Mammary epithelial cell (primary cell): ENCODE measurements at regions of chr1 and their contacts with region 1.

Region 1: GRCh38 chr1:94012686-94013624 is 103.7 kb upstream of the GCLM start:
- DNase-seq: no peak
- H3K4me3 ChIP-seq: no peak overlapping the region
- H3K27ac ChIP-seq: no peak overlapping the region
- H3K4me1 ChIP-seq: peaks cover 5% of the 10 kb centered on the region
- H3K27me3 ChIP-seq: no peaks in the 10 kb centered on the region
- CTCF ChIP-seq: no peak

Region 2: GRCh38 chr1:93919780-93920179 is 93.2 kb before region 1 on chr1:
- CTCF ChIA-PET with region 1: no interaction called
- dilution Hi-C with region 1: loop called (anchors 5 kb)
- in situ Hi-C with region 1: no loop called
- intact Hi-C with region 1: no loop called
- DNase-seq: no peak
- H3K4me3 ChIP-seq: no peak overlapping the region
- H3K27ac ChIP-seq: no peak overlapping the region
- H3K4me1 ChIP-seq: no peaks in the 10 kb centered on the region
- H3K27me3 ChIP-seq: no peaks in the 10 kb centered on the region
- CTCF ChIP-seq: no peak

Region 3: DNA sequence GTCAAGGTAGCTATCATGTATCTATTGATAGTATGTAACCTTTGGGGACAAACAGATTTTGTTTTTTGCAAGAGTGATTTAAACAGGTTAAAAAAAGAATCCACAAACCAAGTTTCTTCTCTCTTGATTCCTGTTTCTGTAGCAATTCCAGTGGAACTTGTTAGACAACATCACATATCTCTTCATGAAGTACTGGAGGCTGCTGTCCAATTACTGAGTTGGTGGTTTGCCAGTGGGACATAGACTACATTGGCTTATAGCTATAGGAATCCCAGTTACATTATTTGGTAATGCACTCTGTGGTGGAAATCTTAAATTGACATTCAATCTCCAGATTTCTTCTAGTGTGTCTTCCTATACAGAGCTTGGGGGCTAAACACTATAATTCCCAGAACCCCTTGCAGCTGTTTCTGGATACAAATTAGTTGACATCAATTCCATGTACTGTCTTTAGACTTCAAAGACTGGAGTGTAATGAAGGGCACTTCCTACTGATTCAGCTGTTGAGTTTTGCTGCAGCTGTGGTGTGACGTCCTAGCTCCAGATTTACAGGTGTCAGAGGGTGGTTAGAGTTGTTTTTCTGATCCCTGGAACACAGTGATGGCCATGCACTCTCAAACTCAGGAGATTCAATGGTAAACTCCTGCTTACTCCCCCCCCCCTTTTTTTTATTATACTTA is 74.3 kb before region 1 on chr1:
- CTCF ChIA-PET with region 1: no interaction called
- dilution Hi-C with region 1: no loop called
- in situ Hi-C with region 1: no loop called
- intact Hi-C with region 1: no loop called
- DNase-seq: no peak
- H3K4me3 ChIP-seq: no peak overlapping the region
- H3K27ac ChIP-seq: no peak overlapping the region
- H3K4me1 ChIP-seq: no peaks in the 10 kb centered on the region
- H3K27me3 ChIP-seq: no peaks in the 10 kb centered on the region
- CTCF ChIP-seq: no peak

Region 4: DNA sequence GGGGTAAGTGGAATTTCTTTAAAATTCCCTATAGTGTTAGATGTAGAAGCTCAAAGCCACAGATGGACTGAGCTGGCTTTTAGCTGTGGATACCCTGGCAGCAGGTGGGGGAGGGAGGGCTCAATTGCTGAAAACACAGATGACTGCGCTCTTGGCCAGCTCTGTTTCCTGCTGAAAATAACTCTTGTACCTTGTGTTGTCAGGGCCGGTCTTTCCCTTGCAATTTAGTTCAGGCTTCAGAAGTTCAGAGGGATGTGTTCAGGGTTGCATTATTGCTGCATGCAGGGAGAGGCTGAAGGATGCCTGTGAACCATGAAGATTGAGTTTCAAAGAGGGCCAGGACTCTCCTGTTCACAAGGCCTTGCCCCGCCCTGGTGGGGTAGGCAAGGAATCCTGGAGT is 45.6 kb before region 1 on chr1:
- CTCF ChIA-PET with region 1: no interaction called
- dilution Hi-C with region 1: no loop called
- in situ Hi-C with region 1: no loop called
- intact Hi-C with region 1: loop called (anchors 2 kb)
- DNase-seq: no peak
- H3K4me3 ChIP-seq: no peak overlapping the region
- H3K27ac ChIP-seq: no peak overlapping the region
- H3K4me1 ChIP-seq: peaks cover 64% of the 10 kb centered on the region
- H3K27me3 ChIP-seq: no peaks in the 10 kb centered on the region
- CTCF ChIP-seq: no peak